ENCODE measurements at regions of chr1 and their contacts with region 1.

Region 1: DNA sequence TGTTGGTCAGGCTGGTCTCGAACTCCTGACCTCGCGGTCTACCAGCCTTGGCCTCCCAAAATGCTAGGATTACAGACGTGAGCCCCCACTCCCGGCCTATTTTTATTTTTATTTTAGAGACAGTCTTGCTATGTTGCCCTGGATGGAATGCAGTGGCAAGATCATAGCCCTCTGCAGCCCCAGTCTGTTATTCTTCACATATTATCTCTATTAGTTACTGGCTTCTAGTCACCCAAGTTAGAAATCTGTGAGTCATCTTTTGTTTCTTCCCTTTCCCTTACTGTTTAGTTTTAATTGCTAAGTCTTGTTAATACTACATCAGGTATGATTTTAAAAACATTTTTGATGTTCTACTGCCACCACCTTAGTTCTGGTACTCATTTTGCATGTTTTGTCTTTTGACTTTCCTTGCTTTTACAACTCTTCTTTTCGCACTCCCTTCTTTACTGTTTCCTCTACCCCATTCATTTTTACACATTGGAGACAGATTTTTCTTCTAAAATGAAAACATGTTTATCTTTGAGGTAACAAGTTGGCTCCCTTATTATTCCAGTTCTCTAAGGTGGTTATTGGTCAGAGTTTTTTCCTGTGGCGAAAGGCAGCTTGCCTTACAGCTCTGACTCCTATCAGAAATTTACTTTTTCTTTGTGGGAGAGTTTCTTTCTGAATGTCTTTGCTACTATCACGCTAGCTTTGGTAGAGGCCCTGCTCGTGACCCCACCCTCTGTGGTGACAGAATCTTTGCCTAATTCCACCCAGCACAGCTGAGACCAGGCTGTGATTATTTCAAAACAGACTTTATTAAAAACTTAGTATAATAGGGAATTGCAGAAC is 19.5 kb downstream of the ZMYM4 start:
- DNase-seq: no peak
- ATAC-seq: no peak
- H3K4me3 ChIP-seq: no peak overlapping the region
- H3K27ac ChIP-seq: no peak overlapping the region
- H3K4me1 ChIP-seq: peaks cover 13% of the 10 kb centered on the region
- H3K27me3 ChIP-seq: no peaks in the 10 kb centered on the region
- CTCF ChIP-seq: no peak
- EP300 ChIP-seq: no peak
- POLR2A ChIP-seq: no peak
- RAD21 ChIP-seq: no peak

Region 2: GRCh38 chr1:35220976-35221375 is 67.0 kb before region 1 on chr1:
- CTCF ChIA-PET with region 1: no interaction called
- POLR2A ChIA-PET with region 1: no interaction called
- in situ Hi-C with region 1: loop called (anchors 10 kb)
- intact Hi-C with region 1: no loop called
- DNase-seq: peak; percentile 23
- ATAC-seq: peak; percentile 86
- H3K4me3 ChIP-seq: no peak overlapping the region
- H3K27ac ChIP-seq: no peak overlapping the region
- H3K4me1 ChIP-seq: no peaks in the 10 kb centered on the region
- H3K27me3 ChIP-seq: no peaks in the 10 kb centered on the region; a peak in 1 of 5 replicates
- CTCF ChIP-seq: peak; percentile 41; the same call in 1 of the 2 replicates
- EP300 ChIP-seq: no peak
- POLR2A ChIP-seq: no peak
- RAD21 ChIP-seq: no peak